ENCODE measurements at regions of chr22 and their contacts with region 1.

Region 1: GRCh38 chr22:22959147-22959827 is 71.7 kb downstream of the IGLL5 start:
- DNase-seq: peak; percentile 72 to 94 (median 85)
- H3K4me3 ChIP-seq: no peak overlapping the region
- H3K27ac ChIP-seq: no peak overlapping the region
- H3K27me3 ChIP-seq: peaks cover 0 to under 1% (median 0%) of the 10 kb centered on the region in 45 donors
- CTCF ChIP-seq: peak; percentile 96 to 100 (median 99)

Region 2: DNA sequence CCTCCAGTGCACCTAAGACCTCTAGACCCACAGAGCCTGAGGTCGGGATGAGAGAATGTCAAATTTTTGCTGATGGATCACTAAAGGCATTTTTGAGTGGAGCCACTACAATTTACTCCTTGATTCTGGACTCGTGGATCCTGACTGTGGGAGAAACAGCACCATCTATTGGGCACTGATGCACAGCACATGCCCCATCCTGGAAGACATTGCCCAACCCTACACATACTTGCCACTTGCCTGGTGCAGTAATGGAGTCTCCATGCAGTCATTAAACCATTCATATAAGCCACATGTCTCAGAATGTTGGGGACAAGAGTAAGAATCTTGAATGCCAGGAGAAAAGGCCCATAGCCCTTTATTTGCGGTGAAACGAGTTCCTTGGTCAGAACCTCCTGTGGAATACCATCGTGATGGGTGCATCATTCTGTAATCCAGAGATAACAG is 211.0 kb before region 1 on chr22:
- intact Hi-C with region 1: loop called in 1 of 2 experiments (anchors 5 kb)
- DNase-seq: peak in 5 of 10 donors; percentile 23 to 63 (median 56)
- H3K4me3 ChIP-seq: no peak overlapping the region
- H3K27ac ChIP-seq: no peak overlapping the region
- H3K27me3 ChIP-seq: peaks cover 0 to 13% (median 0%) of the 10 kb centered on the region in 45 donors
- CTCF ChIP-seq: peak; percentile 23 to 82 (median 69)

Region 3: DNA sequence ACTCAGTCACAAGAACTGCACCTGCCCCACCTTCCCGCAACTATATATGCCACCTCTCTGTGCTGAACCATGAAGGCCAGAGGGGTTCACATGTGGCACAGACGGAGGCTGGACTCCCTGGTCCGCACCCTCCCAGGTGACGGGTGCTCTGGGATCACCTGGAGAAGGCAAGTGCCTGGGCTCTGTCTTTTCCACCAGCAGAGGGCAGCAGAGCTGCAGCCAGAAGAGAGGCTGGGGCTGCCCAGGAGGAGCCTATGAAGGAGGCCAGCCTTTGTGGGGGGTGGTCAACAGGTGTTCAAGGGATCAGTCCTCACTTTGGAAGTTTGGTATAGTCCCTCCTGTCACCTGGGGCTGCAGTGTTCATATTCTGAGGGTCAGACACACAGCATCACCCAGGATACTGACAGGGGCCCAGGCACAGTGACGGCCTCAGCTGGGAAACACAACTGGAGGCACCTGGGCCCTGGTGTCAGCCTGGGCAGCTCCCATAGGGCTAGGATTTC is 110.9 kb before region 1 on chr22:
- intact Hi-C with region 1: loop called (anchors 1 to 5 kb)
- DNase-seq: peak in 6 of 10 donors; percentile 15 to 49 (median 35)
- H3K4me3 ChIP-seq: no peak overlapping the region
- H3K27ac ChIP-seq: no peak overlapping the region
- H3K27me3 ChIP-seq: peaks cover 0 to 25% (median 4%) of the 10 kb centered on the region in 45 donors
- CTCF ChIP-seq: peak; percentile 26 to 90 (median 81)

Region 4: DNA sequence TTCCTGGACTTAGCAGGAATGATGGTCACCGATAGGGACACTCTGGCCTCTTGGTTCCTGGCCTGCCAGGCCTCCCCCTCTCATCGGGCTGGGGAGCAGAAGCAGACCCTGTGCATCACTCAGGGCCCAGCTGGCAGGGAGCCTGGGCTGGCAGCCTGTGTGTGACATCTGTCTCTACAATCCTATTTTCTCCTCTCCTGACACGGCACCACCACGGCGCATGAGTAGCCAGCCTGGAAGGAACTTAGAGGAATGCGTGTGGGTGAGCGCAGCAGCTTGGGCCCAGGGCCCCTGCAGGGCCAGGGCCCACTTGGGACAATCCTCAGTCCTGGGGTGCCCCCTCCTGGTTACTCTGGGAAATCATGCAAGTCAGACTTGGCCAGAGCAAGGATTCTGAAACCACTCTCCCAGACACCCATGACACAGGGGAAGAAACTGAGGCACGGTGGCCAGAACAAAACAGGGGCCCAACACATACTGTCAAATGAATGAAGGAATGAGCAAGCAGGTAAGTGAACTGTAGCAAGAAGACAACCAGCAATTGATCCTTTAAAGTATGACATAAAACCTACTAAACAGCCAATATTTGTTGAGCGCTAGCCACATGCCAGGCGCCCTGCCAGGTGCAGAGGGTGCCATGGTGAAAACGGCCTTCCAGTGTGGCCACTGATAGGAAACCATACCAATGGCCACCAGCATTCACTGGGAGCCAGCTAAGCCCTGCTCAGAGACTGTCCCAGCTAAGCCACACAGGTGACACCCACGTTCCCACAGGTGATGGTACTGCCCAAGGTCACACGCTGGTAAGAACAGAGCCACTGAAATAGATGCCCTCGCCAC is 169.2 kb after region 1 on chr22:
- intact Hi-C with region 1: loop called (anchors 1 kb)
- DNase-seq: peak; percentile 79 to 92 (median 88)
- H3K4me3 ChIP-seq: no peak overlapping the region
- H3K27ac ChIP-seq: peak overlapping the region; percentile 40 to 100 (median 86)
- H3K27me3 ChIP-seq: no peaks in the 10 kb centered on the region
- CTCF ChIP-seq: peak; percentile 64 to 98 (median 91)

Region 5: GRCh38 chr22:23385291-23386244 is 426.3 kb after region 1 on chr22:
- intact Hi-C with region 1: loop called (anchors 2 to 5 kb)
- DNase-seq: peak; percentile 79 to 91 (median 88)
- H3K4me3 ChIP-seq: no peak overlapping the region
- H3K27ac ChIP-seq: peak overlapping the region in 4 of 59 donors; percentile 8 to 61 (median 42)
- H3K27me3 ChIP-seq: no peaks in the 10 kb centered on the region
- CTCF ChIP-seq: peak; percentile 93 to 100 (median 99)

Measured in dorsolateral prefrontal cortex (tissue), 120 donors.